ENCODE measurements at regions of chr1 and their contacts with region 1.

Region 1: GRCh38 chr1:117138561-117138960 is 17.0 kb upstream of the TRIM45 start:
- DNase-seq: no peak
- H3K4me3 ChIP-seq: no peak overlapping the region
- H3K27ac ChIP-seq: no peak overlapping the region
- H3K4me1 ChIP-seq: no peaks in the 10 kb centered on the region
- H3K27me3 ChIP-seq: no peaks in the 10 kb centered on the region
- CTCF ChIP-seq: no peak

Region 2: DNA sequence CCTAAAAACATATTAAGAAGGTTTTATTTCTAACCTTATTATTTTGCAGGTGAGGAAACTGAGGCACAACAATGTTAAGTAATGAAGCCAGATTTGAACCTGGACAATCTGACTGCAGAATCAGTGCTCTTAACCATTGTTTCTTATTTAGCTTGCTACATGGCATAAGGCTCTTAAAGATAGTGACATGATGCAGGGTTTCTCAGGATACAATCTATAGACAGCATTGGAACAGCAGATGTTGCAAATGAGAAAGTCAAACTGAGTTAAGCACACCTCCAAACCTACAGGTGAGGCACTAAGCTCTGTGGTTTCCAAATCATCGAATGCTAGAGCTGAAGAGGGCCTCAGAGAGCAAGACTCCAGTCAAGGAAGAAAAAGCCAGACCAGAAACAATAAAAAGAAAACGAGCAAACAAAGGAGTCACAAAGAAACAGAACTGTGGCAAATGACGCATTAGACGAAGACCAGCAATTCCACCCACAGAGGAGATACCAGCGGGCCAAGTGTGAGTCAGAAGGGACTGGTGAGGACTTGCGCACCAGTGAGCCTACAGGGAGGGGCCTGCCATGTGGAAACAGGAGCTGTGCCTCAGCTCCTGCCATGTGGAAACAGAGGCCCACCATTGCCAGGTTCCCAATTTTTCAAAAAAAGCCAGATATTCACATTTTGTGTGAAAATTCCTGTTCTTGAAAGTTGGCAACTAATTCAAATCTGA is 582.1 kb before region 1 on chr1:
- CTCF ChIA-PET with region 1: no interaction called
- POLR2A ChIA-PET with region 1: no interaction called
- intact Hi-C with region 1: no loop called
- DNase-seq: peak; percentile 52
- H3K4me3 ChIP-seq: no peak overlapping the region
- H3K27ac ChIP-seq: no peak overlapping the region
- H3K4me1 ChIP-seq: peaks cover 5% of the 10 kb centered on the region
- H3K27me3 ChIP-seq: no peaks in the 10 kb centered on the region
- CTCF ChIP-seq: no peak

Region 3: GRCh38 chr1:117121776-117122697 is 16.5 kb before region 1 on chr1:
- CTCF ChIA-PET with region 1: no interaction called
- POLR2A ChIA-PET with region 1: no interaction called
- intact Hi-C with region 1: loop called (anchors 2 kb)
- DNase-seq: peak; percentile 96
- H3K4me3 ChIP-seq: peak overlapping the region; percentile 59
- H3K27ac ChIP-seq: peak overlapping the region; percentile 82
- H3K4me1 ChIP-seq: no peaks in the 10 kb centered on the region
- H3K27me3 ChIP-seq: peaks cover 8% of the 10 kb centered on the region
- CTCF ChIP-seq: peak; percentile 92

Region 4: GRCh38 chr1:117231748-117232373 is 93.3 kb after region 1 on chr1:
- CTCF ChIA-PET with region 1: no interaction called
- POLR2A ChIA-PET with region 1: no interaction called
- intact Hi-C with region 1: no loop called
- DNase-seq: no peak
- H3K4me3 ChIP-seq: no peak overlapping the region
- H3K27ac ChIP-seq: no peak overlapping the region
- H3K4me1 ChIP-seq: no peaks in the 10 kb centered on the region
- H3K27me3 ChIP-seq: no peaks in the 10 kb centered on the region
- CTCF ChIP-seq: no peak

Measured in A673 (cell line).